ENCODE measurements at regions of chr1 and their contacts with region 1.

Region 1: DNA sequence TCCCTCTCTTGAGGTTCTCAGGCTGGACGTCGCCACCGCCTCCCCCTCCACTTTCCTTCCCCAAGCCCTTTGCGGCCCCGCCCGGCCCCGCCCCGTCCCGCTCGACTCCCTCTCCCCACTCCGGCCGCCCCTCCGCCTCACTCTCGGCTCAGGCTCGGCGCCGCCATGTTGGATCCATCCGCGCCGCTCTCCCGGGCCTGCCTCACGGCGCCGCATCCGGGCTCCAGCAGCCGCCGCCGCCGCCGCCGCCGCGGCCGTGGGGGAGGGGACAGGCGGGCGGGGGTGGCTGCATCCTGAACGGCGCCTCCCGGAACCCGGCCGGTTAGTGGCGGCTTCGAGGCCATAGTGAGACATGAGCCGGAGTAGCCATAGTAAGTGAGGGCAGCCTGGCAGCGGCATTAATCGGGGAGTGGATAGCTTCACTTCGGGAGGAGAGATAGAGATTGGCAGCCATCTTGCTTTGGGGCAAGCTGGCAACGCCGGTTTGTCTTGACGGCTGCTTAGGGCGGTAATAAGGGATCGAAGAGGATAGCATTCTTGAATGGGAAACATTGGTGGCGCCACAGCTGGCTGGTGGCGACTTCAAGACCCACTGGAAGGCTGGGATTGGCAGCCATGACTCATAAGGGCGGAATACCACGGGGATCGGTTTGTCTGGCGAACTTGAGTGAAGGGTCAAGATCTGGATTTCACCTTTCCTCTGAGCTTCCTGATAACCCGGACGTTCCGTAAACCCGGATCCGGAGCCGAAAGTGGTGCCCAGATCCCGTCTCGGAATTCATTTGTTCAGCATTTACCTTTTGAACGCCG is at the start of gene DEDD:
- DNase-seq: peak; percentile 89
- H3K4me3 Mint-ChIP-seq: no peak within 1 kb of the TSS
- H3K27ac Mint-ChIP-seq: no peak within 1 kb of the TSS
- H3K4me1 Mint-ChIP-seq: peaks cover 35% of the 10 kb centered on the region
- H3K27me3 Mint-ChIP-seq: no peaks in the 10 kb centered on the region
- total RNA-seq, gene DEDD: 37.5 and 40.3 TPM in 2 replicates

Region 2: DNA sequence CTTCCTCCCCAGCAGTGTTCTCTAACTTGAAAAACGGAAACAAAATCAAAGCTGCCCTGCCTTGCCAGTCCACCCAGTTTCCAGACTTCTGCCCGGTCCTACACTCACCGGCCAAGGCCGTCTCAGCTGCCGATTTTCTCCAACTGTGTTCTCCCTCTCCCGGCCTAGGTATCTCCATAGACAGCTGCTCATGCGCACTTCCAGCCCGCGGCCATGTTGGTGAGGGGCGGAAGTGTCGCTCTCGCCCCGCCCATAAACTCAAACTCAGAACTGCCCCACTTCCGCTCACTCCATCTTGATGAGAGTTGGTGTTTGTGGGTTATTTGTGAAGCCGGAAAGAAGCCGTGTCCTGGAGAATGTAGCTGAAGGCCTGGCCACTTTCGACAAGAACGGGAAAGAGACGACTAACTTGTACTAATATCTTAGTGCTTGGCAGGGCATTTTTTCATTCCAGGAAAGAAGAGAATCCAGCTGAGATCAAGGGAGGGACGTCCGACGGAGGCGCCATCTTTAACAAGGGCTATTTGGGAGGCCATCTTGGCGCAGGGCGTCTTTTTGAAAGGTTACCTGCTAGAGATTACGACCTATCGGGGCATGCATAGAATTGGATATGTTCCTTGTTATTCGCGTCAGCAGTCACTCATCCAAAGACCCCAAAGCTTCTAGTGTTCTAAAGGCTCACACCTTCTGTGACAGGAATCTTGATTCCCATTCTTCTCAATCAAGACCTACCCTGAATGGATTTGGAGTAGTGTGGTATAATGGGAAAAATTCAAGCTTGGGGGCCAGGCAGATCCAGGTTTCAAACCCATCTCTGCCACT is 86.7 kb before region 1 on chr1 and contains the start of gene USF1:
- intact Hi-C with region 1: loop called (anchors 1 kb)
- DNase-seq: peak; percentile 92
- H3K4me3 Mint-ChIP-seq: peak within 1 kb of the TSS; percentile 95
- H3K27ac Mint-ChIP-seq: peak within 1 kb of the TSS; percentile 100
- H3K4me1 Mint-ChIP-seq: peaks cover 33% of the 10 kb centered on the region
- H3K27me3 Mint-ChIP-seq: no peaks in the 10 kb centered on the region
- total RNA-seq, gene USF1: 49.1 and 53.2 TPM in 2 replicates

Region 3: GRCh38 chr1:161092621-161093028 is 40.0 kb before region 1 on chr1:
- intact Hi-C with region 1: loop called (anchors 2 kb)
- DNase-seq: no peak
- H3K4me3 Mint-ChIP-seq: no peak overlapping the region
- H3K27ac Mint-ChIP-seq: peak overlapping the region; percentile 57
- H3K4me1 Mint-ChIP-seq: peaks cover 54% of the 10 kb centered on the region
- H3K27me3 Mint-ChIP-seq: no peaks in the 10 kb centered on the region

Region 4: DNA sequence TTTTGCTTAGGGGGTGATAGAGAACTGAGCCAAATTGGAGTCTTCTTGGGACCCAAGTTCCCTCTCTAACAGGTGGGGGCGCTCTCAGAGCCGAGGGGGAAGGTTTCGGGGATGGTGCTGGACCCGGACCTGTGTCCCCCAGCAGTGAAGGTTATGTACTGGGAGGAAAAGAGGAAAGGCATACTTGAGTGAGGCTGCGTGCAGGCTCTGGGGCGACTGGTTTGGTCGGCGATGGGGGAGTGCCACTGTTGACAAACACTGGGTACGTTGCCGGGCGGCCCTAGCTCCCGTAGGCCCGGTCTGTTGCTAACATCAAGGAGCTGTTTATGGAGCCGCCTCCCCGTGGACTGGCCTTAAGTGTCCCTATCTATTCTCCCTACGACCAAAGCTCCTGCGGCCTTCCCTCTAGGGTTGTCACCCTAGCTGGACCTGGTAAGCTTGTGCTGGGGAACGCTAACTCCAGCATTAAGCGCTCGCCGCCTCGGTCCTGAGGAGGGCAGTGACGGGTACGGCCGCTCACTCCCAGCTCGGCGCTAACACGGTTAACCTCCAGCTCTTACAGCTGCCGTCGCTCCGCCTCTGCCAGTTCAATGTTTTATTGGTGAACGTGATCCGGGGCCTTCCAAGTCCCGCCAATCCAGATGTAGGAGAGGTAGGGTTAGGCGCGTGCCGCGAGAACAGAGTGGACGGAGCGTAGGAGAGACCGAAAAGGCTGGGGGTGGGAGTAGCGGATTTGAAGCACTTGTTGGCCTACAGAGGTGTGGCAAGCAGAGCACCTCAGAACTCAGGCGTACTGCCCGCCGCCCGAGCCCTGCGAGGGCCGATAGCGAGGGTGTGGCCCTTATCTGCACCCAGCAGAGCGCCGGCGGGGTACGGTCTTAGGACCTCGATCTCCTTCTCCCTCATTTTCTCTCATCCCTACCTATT is 33.4 kb after region 1 on chr1 and contains the start of gene PPOX:
- intact Hi-C with region 1: loop called (anchors 1 kb)
- DNase-seq: peak; percentile 95
- H3K4me3 Mint-ChIP-seq: peak within 1 kb of the TSS; percentile 92
- H3K27ac Mint-ChIP-seq: peak within 1 kb of the TSS; percentile 96
- H3K4me1 Mint-ChIP-seq: peaks cover 36% of the 10 kb centered on the region
- H3K27me3 Mint-ChIP-seq: no peaks in the 10 kb centered on the region
- total RNA-seq, gene PPOX: 35.6 and 36.5 TPM in 2 replicates